Activated CD4-positive, alpha-beta T cell treated with anti-CD3 and anti-CD28 coated beads, Interleukin-2, amount 10 ng/mL, durations not matched to agents 24 days and 14 days (primary cell): ENCODE measurements at regions of chr19 and their contacts with region 1.

Region 1: GRCh38 chr19:53906211-53907192 is 2.6 kb upstream of the CACNG7 start:
- DNase-seq: peak; percentile 92
- H3K4me3 Mint-ChIP-seq: no peak overlapping the region
- H3K27ac Mint-ChIP-seq: no peak overlapping the region
- H3K4me1 Mint-ChIP-seq: peaks cover 17% of the 10 kb centered on the region
- H3K27me3 Mint-ChIP-seq: peaks cover 60% of the 10 kb centered on the region

Region 2: GRCh38 chr19:53849237-53849676 is 57.2 kb before region 1 on chr19:
- intact Hi-C with region 1: loop called (anchors 10 kb)
- DNase-seq: no peak
- H3K4me3 Mint-ChIP-seq: no peak overlapping the region
- H3K27ac Mint-ChIP-seq: no peak overlapping the region
- H3K4me1 Mint-ChIP-seq: peaks cover 15% of the 10 kb centered on the region
- H3K27me3 Mint-ChIP-seq: peaks cover 26% of the 10 kb centered on the region

Region 3: DNA sequence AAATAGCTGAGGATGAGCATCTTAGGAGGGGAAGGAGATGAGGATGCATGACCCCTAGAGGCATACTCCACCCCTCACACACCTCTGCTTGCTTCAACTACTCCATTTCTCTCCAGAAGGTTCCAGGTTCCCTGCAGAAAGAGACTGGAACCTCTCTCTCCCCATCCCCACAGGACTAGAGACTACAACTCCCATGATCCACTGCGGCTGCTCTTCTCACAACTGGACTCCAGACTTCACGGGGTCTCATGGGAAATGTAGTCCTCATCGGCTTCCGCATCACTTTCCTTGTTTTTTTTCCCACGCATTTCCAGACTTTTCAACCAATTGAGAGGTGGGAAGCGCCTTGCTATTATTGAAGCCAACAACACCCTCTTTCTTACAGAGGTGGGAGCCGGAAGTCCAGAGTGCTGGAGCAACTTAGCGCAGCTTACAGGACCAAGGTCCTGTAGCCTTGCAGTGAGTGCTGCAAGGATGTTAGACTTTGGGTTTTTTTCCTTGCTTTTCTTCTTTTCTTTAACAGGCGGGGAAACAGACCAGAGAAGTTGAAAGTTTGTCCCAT is 71.0 kb after region 1 on chr19:
- intact Hi-C with region 1: loop called (anchors 5 kb)
- DNase-seq: peak; percentile 87
- H3K4me3 Mint-ChIP-seq: peak overlapping the region; percentile 49
- H3K27ac Mint-ChIP-seq: no peak overlapping the region
- H3K4me1 Mint-ChIP-seq: peaks cover 15% of the 10 kb centered on the region
- H3K27me3 Mint-ChIP-seq: peaks cover 43% of the 10 kb centered on the region

Region 4: DNA sequence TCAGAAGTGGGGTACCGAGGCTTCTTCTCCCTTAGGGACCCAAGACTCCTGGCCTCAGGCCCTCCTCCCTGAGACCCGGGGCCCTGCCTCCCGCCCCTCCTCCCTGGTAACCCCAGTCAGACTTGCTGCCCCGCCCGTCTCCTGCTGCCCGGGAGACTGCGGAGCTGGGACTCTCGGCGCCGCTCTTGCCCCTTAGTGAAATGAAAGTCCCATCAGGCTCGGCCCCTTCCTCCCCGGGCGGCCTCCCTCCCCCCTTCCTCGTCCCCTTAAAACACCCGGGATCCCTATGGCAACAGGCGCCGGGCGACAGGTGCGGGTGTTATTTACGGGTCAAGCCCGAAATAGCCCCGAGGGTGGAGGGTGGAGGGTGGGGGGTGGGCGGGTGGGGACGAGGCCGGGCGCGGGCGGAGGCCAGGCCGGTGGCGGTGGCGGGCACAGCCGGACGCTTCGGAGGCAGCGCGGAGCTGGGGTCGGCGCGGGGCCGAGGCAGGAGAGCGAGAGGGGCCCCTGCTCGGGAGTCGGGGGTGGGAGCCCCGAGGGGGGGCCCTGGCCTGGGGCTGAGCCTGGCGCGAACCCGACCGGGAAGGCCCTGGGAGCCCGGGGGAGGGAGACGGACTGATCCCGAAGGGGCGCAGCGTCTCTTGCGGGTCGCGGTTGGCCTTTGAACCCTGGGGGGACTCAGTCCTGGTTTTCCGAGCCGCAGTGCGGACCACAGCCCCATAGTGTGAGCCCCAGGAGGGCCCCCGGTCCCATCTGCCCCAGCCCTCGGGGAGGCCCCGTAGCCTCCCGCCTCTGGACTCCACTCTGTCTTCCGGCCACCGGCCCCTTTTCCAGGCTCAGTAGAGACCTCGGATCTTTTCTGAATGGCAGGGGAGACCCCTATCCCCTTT is 85.0 kb after region 1 on chr19 and contains the start of gene CACNG6:
- intact Hi-C with region 1: no loop called
- DNase-seq: no peak
- H3K4me3 Mint-ChIP-seq: no peak within 1 kb of the TSS
- H3K27ac Mint-ChIP-seq: no peak within 1 kb of the TSS
- H3K4me1 Mint-ChIP-seq: no peaks in the 10 kb centered on the region
- H3K27me3 Mint-ChIP-seq: peaks cover 24% of the 10 kb centered on the region
- total RNA-seq, gene CACNG6: not detected in 2 replicates

Region 5: DNA sequence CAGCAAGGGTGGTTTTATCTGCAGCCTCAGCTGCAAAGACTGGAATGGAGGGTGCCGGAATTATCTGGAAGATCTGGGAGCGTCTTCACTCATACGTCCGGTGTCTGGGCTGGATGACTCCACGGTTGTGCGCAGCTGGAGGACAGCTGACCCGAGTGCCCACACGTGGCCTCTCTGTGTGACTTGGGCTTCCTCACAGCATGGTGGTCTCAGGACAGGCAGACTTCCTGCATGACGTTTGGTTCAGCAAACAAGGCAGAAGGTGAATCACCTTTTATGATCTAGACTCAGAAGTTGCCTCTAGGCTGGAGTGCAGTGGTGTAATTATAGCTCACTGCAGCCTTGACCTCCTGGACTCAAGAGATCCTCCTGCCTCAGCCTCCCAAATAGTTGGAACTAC is 118.2 kb after region 1 on chr19:
- intact Hi-C with region 1: loop called (anchors 1 kb)
- DNase-seq: no peak
- H3K4me3 Mint-ChIP-seq: no peak overlapping the region
- H3K27ac Mint-ChIP-seq: no peak overlapping the region
- H3K4me1 Mint-ChIP-seq: peaks cover 4% of the 10 kb centered on the region
- H3K27me3 Mint-ChIP-seq: peaks cover 6% of the 10 kb centered on the region